ENCODE measurements at regions of chr10 and their contacts with region 1.

Region 1: DNA sequence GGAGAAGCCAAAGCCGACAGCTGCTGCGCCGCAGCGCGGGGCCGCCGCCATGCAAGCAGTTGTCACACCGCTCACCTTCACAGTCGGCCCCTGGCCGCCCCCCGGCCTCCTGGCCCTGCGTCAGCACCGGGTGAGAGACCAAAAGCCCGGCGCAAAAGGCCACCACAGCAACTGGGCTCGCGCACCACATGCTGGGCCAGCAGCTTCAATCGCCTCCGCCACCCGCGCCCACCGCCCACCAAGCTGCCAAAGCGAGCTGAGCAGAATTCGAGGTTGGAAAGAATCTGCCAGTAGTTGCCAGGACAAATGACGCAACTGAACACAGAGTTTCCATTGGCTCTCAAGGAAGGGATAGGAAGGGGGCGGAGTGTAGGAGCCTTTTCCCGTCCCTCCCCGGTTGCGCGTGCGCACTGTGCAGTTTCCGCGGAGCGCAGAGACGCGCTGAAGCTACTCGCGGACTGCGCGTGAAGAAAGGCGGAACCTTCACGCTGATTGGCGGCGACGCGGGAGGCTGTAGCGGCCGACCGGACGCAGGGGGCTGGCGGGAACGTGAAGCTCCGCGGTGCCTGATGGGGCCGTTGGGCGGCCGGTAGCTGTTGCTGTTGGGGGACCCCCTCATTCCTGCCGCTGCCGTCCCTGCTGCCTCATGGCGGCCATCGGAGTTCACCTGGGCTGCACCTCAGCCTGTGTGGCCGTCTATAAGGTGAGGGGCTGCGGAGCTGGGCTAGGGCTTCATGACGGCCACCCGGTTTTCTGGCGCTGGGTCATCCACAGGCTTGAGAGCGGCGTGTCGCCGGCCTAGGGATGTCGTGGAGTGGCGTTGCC is at the starts of genes CDNF, HSPA14 and MSANTD7:
- DNase-seq: peak; percentile 99
- H3K4me3 ChIP-seq: peak within 1 kb of the TSS; percentile 79 to 87
- H3K27ac ChIP-seq: peak within 1 kb of the TSS; percentile 95 to 99
- H3K4me1 ChIP-seq: no peaks in the 10 kb centered on the region
- H3K27me3 ChIP-seq: no peaks in the 10 kb centered on the region
- CTCF ChIP-seq: peak in 1 of 4 experiments; percentile 4
- POLR2A ChIP-seq: peak; percentile 83
- total RNA-seq, gene CDNF: 15.8 to 18.4 TPM
- total RNA-seq, gene HSPA14: 6.7 to 11.5 TPM
- total RNA-seq, gene MSANTD7: 9.5 to 13.3 TPM

Region 2: DNA sequence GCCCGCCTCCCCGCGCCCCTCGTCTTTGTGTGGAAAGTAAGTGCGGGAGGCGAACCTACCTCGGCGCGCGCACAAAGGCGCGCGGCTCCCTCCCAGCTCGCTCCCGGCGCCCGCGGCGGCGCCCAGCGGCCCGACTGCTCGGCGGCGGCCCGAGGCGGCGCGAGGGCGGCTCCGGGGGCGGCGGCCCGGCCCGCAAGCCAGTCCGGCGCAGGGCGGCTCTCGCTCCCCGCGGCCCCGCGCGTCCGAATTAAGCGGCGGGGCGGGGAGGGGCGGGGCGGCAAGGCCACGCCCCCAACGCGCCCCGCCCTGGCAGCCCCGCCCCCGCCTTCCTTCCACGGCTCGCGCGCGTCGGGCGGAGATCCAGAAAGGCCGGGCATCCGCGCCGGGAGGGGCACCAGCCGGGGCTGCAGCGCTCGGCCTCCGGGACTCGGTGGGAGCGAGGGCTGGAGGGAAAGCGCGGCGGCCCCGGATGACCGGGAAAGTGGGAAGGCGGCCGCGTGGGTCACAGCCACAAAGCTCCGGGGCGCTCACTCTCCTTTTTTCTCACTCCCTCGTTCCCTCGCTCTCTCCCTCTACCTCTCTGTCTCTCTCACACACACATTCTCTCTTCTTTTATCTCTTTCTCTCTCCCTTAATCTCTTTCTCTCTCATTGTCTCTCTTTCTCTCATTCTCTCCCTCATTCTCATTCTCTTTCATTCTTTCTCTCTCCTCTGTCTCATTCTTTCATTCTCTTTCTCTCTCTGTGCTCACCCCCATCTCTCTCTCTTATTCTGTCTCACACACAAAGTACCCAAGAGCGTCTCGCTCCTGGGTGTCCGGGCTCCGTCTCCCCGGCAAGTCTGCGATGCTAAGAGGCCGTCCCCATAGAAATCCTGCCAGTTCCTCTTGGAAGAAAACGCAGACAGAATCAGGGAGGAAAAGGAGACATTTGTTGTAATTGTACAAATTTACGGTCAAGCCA is 233.5 kb before region 1 on chr10:
- intact Hi-C with region 1: loop called (anchors 10 kb)
- DNase-seq: peak; percentile 82
- H3K4me3 ChIP-seq: peak overlapping the region; percentile 56 to 57
- H3K27ac ChIP-seq: peak overlapping the region; percentile 69 to 78
- H3K4me1 ChIP-seq: no peaks in the 10 kb centered on the region
- H3K27me3 ChIP-seq: no peaks in the 10 kb centered on the region
- CTCF ChIP-seq: no peak
- POLR2A ChIP-seq: peak; percentile 73

Region 3: GRCh38 chr10:14878266-14879054 is 40.5 kb after region 1 on chr10 and contains the start of gene SUV39H2:
- intact Hi-C with region 1: loop called (anchors 5 kb)
- DNase-seq: peak; percentile 96
- H3K4me3 ChIP-seq: peak within 1 kb of the TSS; percentile 97
- H3K27ac ChIP-seq: peak within 1 kb of the TSS; percentile 97 to 98
- H3K4me1 ChIP-seq: no peaks in the 10 kb centered on the region
- H3K27me3 ChIP-seq: no peaks in the 10 kb centered on the region
- CTCF ChIP-seq: peak in 2 of 4 experiments; percentile 32
- POLR2A ChIP-seq: peak; percentile 80
- total RNA-seq, gene SUV39H2: 13.2 to 15.3 TPM

Region 4: DNA sequence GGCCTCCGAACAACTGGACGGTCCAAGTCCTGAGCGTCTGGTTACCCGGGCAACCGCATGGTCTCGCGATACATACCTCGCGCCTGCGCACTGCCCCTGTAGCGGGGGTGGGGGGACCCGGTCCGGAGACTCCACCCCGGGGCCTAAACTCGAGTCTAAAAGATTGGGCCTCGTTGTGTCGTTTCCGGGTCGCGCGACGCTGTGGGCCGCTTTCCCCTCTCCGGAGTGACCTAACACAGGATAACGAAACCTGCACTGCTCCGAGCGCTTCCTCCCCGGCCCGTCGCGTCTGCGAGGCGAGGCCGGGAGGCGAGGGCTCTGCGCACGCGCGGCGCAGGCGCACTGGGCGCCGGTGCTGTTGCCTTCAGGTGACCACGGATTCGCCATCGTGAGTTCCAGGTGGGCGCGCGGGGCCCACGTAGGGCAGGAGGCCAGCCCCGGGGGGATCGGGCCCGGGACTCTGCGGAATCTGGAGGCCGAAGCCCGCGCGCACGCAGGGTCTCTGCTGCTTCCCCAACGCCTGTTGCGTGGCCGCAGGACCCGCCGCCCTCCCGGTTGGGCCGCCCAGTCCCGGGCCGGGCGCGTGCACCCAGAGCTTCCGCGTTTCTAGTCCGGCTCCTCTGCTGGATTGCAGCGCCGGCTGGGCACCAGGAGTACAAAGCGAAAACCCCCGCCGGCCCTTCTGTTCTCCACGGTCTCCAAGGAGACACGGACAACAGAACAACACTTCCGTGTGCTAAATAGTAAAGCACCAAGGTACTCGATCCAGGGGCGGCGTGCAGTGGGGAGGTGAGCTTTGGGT is 259.2 kb after region 1 on chr10 and contains the start of gene RPP38:
- intact Hi-C with region 1: loop called (anchors 10 kb)
- DNase-seq: peak; percentile 94
- H3K4me3 ChIP-seq: peak within 1 kb of the TSS; percentile 85 to 86
- H3K27ac ChIP-seq: peak within 1 kb of the TSS; percentile 90 to 92
- H3K4me1 ChIP-seq: no peaks in the 10 kb centered on the region
- H3K27me3 ChIP-seq: no peaks in the 10 kb centered on the region
- CTCF ChIP-seq: peak in 1 of 4 experiments; percentile 17
- POLR2A ChIP-seq: peak; percentile 59
- total RNA-seq, gene RPP38: 17.5 to 20.9 TPM

Measured in prostate gland (tissue), 2 donors.